Activated T-helper 1 cell treated with anti-CD3 and anti-CD28 coated beads, Interleukin-12 subunit alpha, Interleukin-12 subunit beta, Interleukin-2, Interleukin-4 antibody, amounts not matched to agents 30 ng/mL and 10 ng/mL and 1 ng/mL, durations not matched to agents 14 hours and 24 hours and 36 hours (primary cell): ENCODE measurements at regions of chr2 and their contacts with region 1.

Region 1: DNA sequence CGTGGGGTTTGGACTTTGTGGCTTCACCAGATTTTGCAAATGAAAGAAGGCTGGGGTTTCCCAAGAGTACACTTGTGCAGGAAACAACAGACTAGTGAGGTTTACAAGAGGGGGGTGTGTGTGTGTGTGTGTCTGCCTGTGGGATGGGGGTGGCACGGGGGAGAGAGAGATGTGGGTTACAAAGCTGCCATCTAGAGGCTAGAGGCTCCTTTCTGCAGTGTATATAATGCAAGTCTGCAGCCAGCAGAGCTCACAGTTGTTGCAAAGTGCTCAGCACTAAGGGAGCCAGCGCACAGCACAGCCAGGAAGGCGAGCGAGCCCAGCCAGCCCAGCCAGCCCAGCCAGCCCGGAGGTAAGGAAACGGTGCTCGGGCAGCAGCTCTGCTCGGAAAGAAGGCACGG is at the start of gene ACKR3:
- DNase-seq: peak; percentile 74
- H3K4me3 Mint-ChIP-seq: peak within 1 kb of the TSS; percentile 76
- H3K27ac Mint-ChIP-seq: peak within 1 kb of the TSS; percentile 40
- H3K4me1 Mint-ChIP-seq: peaks cover 20% of the 10 kb centered on the region
- H3K27me3 Mint-ChIP-seq: peaks cover 28% of the 10 kb centered on the region
- total RNA-seq, gene ACKR3: 0.42 and 0.65 TPM in 2 replicates

Region 2: DNA sequence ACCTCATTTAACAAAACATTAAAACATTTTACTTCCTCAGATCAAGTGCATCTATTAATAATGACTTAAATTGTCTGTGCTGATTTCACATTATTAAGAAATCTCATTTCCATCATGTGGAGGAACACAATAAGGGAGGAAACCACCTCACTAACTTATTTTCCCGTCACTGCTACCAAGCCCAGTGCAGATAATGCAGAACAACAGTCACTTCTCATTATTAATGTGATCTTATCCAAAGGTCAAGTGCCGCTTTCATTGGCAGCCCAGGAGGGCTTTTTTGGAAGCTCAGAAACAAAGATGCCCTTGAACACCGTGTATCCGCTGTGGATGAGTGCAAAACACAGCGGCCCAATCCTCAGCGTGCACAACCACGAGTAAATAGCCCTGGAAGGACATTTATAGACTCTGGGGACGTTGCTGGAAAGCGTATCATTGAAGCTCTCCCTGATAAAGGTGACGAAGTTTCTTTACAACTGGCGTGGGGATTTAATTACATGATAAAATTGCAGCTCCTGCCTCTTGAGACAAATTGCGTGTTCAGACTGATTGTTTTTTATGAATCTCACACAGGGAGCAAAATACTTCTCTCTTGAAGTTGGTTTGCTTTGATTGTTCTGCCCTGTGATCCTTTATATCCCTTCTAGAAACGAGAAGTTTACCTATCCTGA is 318.5 kb before region 1 on chr2:
- intact Hi-C with region 1: no loop called
- DNase-seq: no peak
- H3K4me3 Mint-ChIP-seq: no peak overlapping the region
- H3K27ac Mint-ChIP-seq: no peak overlapping the region
- H3K4me1 Mint-ChIP-seq: no peaks in the 10 kb centered on the region
- H3K27me3 Mint-ChIP-seq: peaks cover 1% of the 10 kb centered on the region

Region 3: DNA sequence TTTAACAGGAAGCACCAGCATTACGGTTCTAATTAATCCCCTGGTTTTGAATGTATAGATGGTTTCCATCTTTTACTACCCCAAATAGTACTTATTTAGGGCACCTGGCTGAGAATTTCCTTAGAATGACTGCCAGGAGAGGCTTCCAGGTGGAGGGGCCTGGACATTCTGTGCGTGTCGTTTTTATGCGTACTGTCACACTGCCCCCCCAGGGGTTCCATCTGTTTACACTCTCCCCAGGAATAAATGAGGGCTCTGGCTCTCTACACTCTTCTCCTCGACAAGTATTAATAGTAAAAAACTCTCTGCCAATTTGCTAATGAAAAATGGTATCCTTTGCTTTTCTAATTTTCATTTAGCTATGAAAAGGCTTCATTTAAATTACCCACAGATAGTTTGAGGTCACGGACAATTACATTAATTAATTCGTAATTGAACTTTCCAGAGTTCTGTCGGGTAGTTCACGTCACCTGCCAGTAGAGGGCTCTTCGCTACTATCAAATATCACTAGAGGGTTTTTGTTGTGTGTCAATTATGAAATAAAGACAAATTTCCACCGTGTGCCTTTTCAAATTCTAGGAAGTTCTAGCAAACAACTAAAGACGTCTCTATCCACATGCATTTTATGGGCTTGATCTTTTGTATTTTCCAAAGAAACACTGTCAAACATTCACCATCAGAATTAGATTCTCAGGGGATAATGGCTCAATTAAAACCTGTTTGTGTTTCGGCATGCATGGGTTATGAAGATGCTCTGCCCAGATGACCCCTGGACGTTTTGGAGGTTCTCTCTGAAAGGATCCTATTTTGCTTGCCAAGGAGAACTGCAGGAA is 216.6 kb before region 1 on chr2:
- intact Hi-C with region 1: loop called (anchors 1 kb)
- DNase-seq: no peak
- H3K4me3 Mint-ChIP-seq: no peak overlapping the region
- H3K27ac Mint-ChIP-seq: no peak overlapping the region
- H3K4me1 Mint-ChIP-seq: no peaks in the 10 kb centered on the region
- H3K27me3 Mint-ChIP-seq: peaks cover 1% of the 10 kb centered on the region

Region 4: GRCh38 chr2:236369661-236370062 is 199.9 kb before region 1 on chr2:
- intact Hi-C with region 1: loop called (anchors 5 kb)
- DNase-seq: no peak
- H3K4me3 Mint-ChIP-seq: no peak overlapping the region
- H3K27ac Mint-ChIP-seq: no peak overlapping the region
- H3K4me1 Mint-ChIP-seq: peaks cover 16% of the 10 kb centered on the region
- H3K27me3 Mint-ChIP-seq: peaks cover 26% of the 10 kb centered on the region

Region 5: DNA sequence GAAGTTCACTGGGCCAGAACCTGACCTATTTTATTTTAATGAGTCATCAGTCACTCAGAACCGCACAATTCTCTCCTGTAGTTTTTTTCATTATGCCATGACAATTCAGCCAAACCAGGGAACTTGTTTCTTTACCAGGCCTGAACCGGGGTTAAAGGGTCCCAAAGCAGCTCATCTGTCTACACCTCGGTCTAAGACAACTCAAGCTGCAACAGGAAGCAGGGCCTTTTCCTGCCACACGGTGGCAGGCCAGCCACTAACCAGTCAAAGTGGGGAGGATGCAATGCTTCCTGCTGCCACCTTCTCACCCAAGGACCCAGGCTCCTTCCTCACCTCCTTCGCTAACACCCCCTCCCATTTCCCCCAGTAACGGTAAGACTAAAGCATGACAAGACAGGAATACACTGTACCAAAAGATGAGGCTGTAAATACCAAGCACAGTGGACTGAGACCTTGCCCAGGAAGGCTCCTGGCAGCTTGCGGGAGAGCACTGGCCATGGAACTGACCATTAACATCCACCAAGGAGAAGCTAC is 56.6 kb before region 1 on chr2:
- intact Hi-C with region 1: loop called (anchors 1 kb)
- DNase-seq: peak; percentile 55
- H3K4me3 Mint-ChIP-seq: no peak overlapping the region
- H3K27ac Mint-ChIP-seq: no peak overlapping the region
- H3K4me1 Mint-ChIP-seq: peaks cover 5% of the 10 kb centered on the region
- H3K27me3 Mint-ChIP-seq: peaks cover 28% of the 10 kb centered on the region

Region 6: GRCh38 chr2:236526455-236527158 is 43.0 kb before region 1 on chr2:
- intact Hi-C with region 1: no loop called
- DNase-seq: no peak
- H3K4me3 Mint-ChIP-seq: no peak overlapping the region
- H3K27ac Mint-ChIP-seq: no peak overlapping the region
- H3K4me1 Mint-ChIP-seq: no peaks in the 10 kb centered on the region
- H3K27me3 Mint-ChIP-seq: peaks cover 23% of the 10 kb centered on the region

Region 7: DNA sequence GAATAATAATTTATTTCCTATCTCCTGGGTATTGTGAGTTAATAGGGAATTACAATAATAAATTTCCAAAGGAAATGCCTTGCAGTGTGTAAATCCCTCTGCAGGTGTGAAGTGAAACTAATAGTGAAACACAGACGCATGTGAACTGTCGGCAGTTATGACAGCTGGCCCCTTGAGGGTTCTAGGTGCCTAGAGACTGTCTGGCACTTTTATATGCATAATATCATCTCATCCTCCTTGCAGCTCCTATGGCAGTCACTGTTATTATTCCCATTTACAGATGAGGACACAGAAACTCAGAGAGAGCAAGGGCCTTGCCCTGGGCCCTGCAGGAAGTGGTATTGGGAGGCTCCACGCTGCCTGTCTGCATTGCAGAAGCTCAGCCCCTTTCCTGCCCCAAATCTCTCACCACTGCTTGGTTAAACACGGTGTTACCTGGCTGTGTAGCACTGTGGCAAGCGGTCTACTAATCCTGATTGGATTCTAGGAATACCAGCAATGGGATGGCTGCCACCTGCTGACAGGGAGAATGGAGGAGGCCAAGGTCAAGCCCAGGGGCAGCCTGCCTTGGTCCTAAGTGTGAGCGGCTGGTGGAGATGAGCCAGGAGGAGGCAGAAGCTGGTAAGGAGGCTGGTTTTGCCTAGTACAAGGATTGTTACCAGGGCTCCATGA is 32.7 kb before region 1 on chr2:
- intact Hi-C with region 1: loop called (anchors 1 kb)
- DNase-seq: peak; percentile 45
- H3K4me3 Mint-ChIP-seq: peak overlapping the region; percentile 92
- H3K27ac Mint-ChIP-seq: peak overlapping the region; percentile 93
- H3K4me1 Mint-ChIP-seq: peaks cover 63% of the 10 kb centered on the region
- H3K27me3 Mint-ChIP-seq: no peaks in the 10 kb centered on the region

Region 8: DNA sequence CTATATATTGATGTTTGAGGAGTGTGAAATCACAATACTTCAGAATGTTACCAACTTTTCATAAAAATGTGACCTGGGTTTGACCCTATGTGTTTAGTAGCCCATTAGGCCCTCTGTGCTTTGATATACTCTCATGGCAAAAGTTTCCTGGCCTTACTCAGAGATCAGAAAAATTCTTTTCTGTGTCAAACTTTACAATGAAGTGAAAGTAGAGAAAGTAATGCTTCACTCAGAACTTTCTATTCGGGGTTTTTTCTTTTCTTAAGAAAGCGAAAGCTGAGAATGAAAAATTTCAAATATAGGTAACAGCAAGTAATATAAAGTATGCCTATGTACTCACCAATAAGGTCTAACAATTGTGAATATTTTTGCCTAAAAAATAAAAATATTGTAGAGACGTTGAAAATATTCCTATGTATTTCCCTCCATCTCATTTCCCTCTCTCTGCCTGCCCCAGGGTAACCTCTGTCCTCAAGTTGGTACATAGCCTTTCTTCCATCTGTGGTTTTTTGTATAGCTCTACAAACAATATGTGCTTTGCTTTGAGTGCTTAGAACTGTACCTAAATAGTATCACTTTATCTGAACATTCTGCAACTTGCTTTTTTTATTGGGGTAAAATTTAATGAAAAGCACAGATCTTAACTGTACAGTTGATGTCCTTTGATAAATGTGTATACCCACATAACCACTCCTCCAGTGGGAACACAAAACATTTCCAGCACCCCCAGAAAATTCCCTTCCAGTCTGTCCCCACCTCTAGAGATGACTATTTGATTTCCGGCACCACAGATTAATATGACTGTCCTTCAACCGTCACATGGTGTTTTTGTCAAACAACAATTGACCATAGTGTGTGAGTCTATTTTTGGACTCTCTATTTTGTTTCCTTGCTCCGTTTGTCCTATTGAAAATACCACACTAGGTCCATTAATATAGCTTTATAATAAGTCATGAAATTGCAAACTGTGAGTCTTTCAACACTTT is 10.3 kb before region 1 on chr2:
- intact Hi-C with region 1: loop called (anchors 1 kb)
- DNase-seq: no peak
- H3K4me3 Mint-ChIP-seq: no peak overlapping the region
- H3K27ac Mint-ChIP-seq: no peak overlapping the region
- H3K4me1 Mint-ChIP-seq: peaks cover 27% of the 10 kb centered on the region
- H3K27me3 Mint-ChIP-seq: peaks cover 11% of the 10 kb centered on the region

Region 9: DNA sequence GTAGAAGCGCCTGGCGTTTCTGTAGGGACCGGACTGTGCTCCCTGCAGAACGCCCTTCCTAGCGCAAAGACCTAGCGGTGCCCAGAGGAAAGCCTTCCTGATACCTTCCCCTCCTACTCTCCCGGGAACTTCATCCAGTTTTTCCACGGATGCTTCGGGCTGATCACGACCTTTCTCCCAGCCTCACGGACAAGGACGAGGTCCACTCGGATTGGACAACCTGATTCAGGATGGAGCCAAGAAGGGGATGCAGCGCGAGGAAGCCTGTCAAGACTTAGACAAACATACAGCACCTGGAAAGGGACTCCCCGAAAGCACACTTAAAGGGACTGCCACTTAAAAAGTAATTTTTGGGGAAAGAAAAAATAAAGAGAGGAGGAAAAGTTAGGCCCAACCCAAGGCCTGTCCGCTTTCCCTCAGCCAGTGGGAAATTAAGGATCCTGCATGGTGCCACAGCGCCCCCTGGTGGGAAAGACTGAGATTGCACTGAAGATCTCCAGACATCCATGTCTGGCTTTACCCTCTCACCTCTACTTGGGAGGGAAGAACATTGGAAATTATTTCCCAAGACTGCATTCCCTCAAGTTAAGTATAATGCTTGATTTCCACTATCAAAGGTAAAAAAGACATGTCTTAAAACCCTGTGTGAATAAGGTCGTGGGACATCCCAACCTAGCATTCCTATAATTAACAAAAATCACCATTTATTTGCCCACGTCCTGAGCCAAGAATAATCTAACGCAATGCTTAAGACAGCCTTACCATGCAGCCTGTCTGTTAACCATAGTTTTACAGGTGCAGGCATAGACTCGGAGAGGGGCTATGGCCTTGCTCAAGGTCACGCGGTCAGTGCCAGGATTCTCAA is 502.7 kb after region 1 on chr2:
- intact Hi-C with region 1: loop called (anchors 2 kb)
- DNase-seq: peak; percentile 35
- H3K4me3 Mint-ChIP-seq: no peak overlapping the region
- H3K27ac Mint-ChIP-seq: no peak overlapping the region
- H3K4me1 Mint-ChIP-seq: no peaks in the 10 kb centered on the region
- H3K27me3 Mint-ChIP-seq: peaks cover 2% of the 10 kb centered on the region